Testis (tissue), 5 donors: ENCODE measurements at regions of chr12 and their contacts with region 1.

Region 1: GRCh38 chr12:7092229-7092985 is at the start of gene C1R:
- DNase-seq: peak; percentile 85
- H3K4me3 ChIP-seq: peak within 1 kb of the TSS; percentile 52 to 58
- H3K27ac ChIP-seq: peak within 1 kb of the TSS; percentile 61 to 79
- H3K4me1 ChIP-seq: peaks cover 15% of the 10 kb centered on the region
- H3K27me3 ChIP-seq: no peaks in the 10 kb centered on the region
- CTCF ChIP-seq: peak; percentile 85 to 92 (median 90)
- POLR2A ChIP-seq: no peak
- total RNA-seq, gene C1R: 51.4 to 174 TPM

Region 2: GRCh38 chr12:6944381-6945186 is 147.8 kb before region 1 on chr12:
- intact Hi-C with region 1: loop called (anchors 10 kb)
- DNase-seq: peak; percentile 95
- H3K4me3 ChIP-seq: peak overlapping the region; percentile 72 to 80
- H3K27ac ChIP-seq: peak overlapping the region; percentile 96 to 97
- H3K4me1 ChIP-seq: peaks cover 28% of the 10 kb centered on the region
- H3K27me3 ChIP-seq: no peaks in the 10 kb centered on the region
- CTCF ChIP-seq: peak; percentile 78 to 91 (median 91)
- POLR2A ChIP-seq: no peak

Region 3: GRCh38 chr12:7042842-7043241 is 49.6 kb before region 1 on chr12:
- intact Hi-C with region 1: no loop called
- DNase-seq: no peak
- H3K4me3 ChIP-seq: no peak overlapping the region
- H3K27ac ChIP-seq: no peak overlapping the region
- H3K4me1 ChIP-seq: no peaks in the 10 kb centered on the region
- H3K27me3 ChIP-seq: no peaks in the 10 kb centered on the region
- CTCF ChIP-seq: peak; percentile 12 to 23 (median 22)
- POLR2A ChIP-seq: no peak

Region 4: DNA sequence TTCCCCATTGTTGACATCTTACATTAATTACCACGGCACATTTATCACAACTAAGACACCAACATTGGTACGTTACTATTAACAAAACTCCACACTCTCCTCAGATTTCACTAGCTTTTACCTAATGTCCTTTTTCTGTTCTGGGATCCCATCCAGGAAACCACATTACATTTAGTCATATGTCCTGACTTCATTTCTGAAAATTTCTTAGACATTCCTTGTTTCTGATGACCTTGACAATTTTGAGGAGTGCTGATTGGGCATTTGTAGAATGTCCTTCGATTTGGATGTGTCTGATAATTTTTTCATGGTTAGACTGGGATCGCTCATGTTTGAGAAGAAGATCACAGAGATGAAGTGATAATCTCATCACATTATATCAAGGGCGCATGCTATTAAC is 176.9 kb after region 1 on chr12:
- intact Hi-C with region 1: no loop called
- DNase-seq: no peak
- H3K4me3 ChIP-seq: no peak overlapping the region
- H3K27ac ChIP-seq: no peak overlapping the region
- H3K4me1 ChIP-seq: no peaks in the 10 kb centered on the region
- H3K27me3 ChIP-seq: no peaks in the 10 kb centered on the region
- CTCF ChIP-seq: no peak
- POLR2A ChIP-seq: no peak